ENCODE measurements at regions of chr4 and their contacts with region 1.

Region 1: DNA sequence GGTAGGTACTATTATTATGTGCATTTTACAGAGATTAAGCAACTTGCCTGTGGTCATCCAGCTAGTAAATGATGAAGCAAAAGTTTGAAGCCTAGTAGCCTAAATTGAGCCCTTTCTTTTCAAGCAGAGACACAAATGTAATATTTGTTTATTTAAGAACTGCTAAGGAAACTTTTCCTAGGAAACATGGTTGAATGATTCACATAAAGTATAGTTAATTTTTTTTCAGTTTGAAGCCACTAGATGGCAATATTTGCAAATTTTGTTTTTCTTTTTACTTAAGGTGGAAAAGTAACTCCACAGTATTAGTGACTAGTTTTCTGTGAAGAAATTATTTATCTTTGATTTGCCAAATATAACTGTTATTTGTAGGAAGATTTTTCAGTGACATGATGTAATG is 52.8 kb upstream of the ANKRD17 start:
- DNase-seq: no peak
- H3K4me3 ChIP-seq: no peak overlapping the region
- H3K27ac ChIP-seq: no peak overlapping the region
- H3K4me1 ChIP-seq: no peaks in the 10 kb centered on the region
- H3K27me3 ChIP-seq: no peaks in the 10 kb centered on the region
- CTCF ChIP-seq: no peak
- EP300 ChIP-seq: no peak
- POLR2A ChIP-seq: no peak
- RAD21 ChIP-seq: peak in 1 of 2 experiments; percentile 24; a peak in 2 of 4 replicates

Region 2: DNA sequence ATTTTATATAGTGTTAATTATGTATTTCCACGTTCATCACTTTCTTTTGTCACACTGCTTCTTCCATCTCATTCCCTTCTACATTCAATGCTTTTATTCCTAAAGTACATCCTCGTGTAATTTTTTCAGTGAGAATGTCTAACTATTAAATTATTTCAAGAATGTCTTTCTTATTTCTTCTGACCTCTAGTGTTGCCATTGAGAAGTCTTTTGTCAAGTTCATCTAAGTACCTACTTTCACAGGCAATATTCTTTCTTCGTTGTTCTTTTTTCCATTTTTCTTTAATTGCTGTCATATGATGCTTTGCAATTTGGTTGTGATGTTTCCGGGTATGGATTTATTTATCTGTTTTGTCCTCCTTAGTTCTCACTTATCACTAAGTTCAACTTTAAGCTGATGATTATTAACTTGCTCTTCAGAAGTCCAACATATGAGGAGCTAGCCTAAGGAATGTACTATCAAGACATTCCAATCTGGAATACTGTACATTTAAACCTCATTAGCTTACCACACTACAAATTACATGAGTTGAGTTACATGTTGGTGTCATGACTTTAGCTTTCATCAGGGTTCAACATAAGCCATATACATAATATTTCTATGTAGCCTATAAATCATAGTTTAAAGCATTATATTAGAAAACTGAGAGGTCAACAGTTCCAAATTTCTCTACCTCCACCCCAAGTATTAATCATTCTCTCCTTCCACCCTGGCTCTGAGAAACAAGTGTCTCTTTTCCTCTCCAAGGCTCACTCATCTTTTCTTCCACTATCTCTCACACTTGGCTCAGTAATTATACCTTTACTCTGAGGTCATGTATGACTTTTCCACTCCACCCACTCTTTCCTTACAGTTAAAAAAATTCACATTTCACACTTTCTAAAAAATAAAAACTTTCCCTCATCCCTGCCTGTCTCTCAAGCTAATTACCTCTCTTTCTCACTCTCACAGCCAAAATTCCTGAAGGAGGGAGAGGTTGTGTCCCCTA is 323.4 kb before region 1 on chr4:
- CTCF ChIA-PET with region 1: no interaction called
- POLR2A ChIA-PET with region 1: no interaction called
- DNase-seq: no peak
- H3K4me3 ChIP-seq: no peak overlapping the region
- H3K27ac ChIP-seq: no peak overlapping the region
- H3K4me1 ChIP-seq: peaks cover 0 to 6% (median 3%) of the 10 kb centered on the region in 4 experiments; a peak in 2 of 7 replicates
- H3K27me3 ChIP-seq: no peaks in the 10 kb centered on the region
- CTCF ChIP-seq: no peak
- EP300 ChIP-seq: no peak
- POLR2A ChIP-seq: no peak
- RAD21 ChIP-seq: no peak

Region 3: GRCh38 chr4:73019462-73020047 is 291.9 kb before region 1 on chr4:
- CTCF ChIA-PET with region 1: no interaction called
- POLR2A ChIA-PET with region 1: no interaction called
- DNase-seq: no peak
- H3K4me3 ChIP-seq: no peak overlapping the region
- H3K27ac ChIP-seq: no peak overlapping the region
- H3K4me1 ChIP-seq: no peaks in the 10 kb centered on the region
- H3K27me3 ChIP-seq: no peaks in the 10 kb centered on the region
- CTCF ChIP-seq: peak in 2 of 3 experiments; percentile 55 to 60; a peak in 2 of 4 replicates
- EP300 ChIP-seq: no peak
- POLR2A ChIP-seq: no peak
- RAD21 ChIP-seq: peak; percentile 81 to 82

Region 4: GRCh38 chr4:73272816-73273215 is 38.6 kb before region 1 on chr4:
- CTCF ChIA-PET with region 1: no interaction called
- POLR2A ChIA-PET with region 1: no interaction called
- DNase-seq: no peak
- H3K4me3 ChIP-seq: no peak overlapping the region
- H3K27ac ChIP-seq: no peak overlapping the region
- H3K4me1 ChIP-seq: no peaks in the 10 kb centered on the region
- H3K27me3 ChIP-seq: no peaks in the 10 kb centered on the region
- CTCF ChIP-seq: no peak
- EP300 ChIP-seq: no peak
- POLR2A ChIP-seq: no peak
- RAD21 ChIP-seq: no peak

Region 5: GRCh38 chr4:73299548-73300280 is 11.7 kb before region 1 on chr4:
- CTCF ChIA-PET with region 1: interaction called, 14 read pairs
- POLR2A ChIA-PET with region 1: no interaction called
- DNase-seq: no peak
- H3K4me3 ChIP-seq: no peak overlapping the region
- H3K27ac ChIP-seq: no peak overlapping the region
- H3K4me1 ChIP-seq: no peaks in the 10 kb centered on the region
- H3K27me3 ChIP-seq: no peaks in the 10 kb centered on the region
- CTCF ChIP-seq: no peak
- EP300 ChIP-seq: no peak
- POLR2A ChIP-seq: no peak
- RAD21 ChIP-seq: no peak

Region 6: DNA sequence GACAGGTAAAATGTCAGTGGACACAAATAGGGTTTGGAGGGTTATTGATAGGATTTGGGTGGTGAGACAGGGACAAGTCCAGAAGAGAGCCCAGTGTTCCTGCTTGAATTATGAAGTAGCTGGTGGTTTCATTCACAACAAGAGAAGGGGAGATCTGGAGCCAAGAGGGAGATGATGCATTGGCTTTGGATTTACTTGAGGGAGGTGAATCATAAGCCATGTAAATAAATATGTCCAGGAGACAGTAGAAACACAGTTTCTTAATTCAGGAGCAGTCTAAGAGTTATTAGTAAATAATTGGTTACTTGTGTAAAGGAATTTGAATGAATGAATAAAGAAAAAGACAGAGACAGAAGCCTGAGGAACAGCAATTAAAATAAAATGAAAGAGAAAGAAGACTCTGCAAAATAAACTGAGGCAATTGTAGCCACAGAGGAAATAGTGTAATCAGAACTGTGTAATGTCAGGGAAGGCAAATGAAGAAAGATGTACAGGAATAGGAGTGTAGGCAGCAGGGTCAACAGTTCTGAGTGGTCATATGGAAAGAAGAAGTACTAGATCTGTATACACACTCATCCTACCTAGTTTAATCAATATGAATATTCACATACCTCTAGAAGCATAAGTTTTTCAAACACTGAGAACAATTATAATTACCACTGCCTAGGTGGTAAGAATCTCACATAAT is 378.8 kb after region 1 on chr4:
- CTCF ChIA-PET with region 1: no interaction called
- POLR2A ChIA-PET with region 1: no interaction called
- DNase-seq: no peak
- H3K4me3 ChIP-seq: no peak overlapping the region
- H3K27ac ChIP-seq: no peak overlapping the region
- H3K4me1 ChIP-seq: no peaks in the 10 kb centered on the region
- H3K27me3 ChIP-seq: peaks cover 0 to 1% (median 0%) of the 10 kb centered on the region in 4 experiments; a peak in 1 of 7 replicates
- CTCF ChIP-seq: no peak
- EP300 ChIP-seq: no peak
- POLR2A ChIP-seq: no peak
- RAD21 ChIP-seq: no peak